PC-3 (cell line): ENCODE measurements at regions of chr1 and their contacts with region 1.

Region 1: DNA sequence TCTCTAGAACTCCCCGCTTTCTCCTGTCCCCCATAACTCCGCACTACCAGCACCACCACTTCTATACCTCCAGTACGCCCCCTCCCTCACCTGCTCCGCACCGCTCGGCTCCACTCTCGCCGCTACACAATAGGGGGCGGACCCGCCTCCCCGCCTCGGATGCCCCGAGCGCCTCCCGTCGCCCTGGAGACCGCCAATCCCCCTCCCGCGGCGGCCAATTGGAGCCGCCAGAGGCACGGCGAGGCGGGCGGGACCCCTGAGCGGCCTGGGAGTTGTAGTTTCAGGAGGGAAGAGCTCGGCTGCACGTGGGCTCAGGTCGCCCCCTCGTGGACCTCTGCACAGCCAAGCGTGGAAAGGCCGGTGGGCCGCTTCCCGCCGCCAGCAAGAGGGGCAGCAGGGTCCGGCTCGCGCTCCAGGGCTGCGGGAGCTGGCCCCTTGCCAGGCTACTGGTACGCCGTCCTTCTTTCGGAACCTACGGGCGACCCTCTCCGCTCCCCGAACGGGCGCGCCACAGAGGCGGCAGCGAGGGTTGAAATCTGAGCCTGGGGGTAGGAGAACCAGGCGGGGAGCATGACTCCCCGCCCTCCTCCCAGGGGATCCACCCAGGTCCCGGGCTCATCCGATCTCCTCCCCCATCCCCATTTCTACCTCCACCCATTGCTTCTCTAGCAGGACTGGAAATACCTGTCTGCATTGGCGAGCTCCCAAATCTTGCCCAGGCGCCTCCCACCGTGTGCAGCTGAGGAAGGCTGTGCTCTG is at the start of gene IGSF9:
- DNase-seq: peak; percentile 99
- ATAC-seq: peak; percentile 92
- H3K4me3 ChIP-seq: peak within 1 kb of the TSS; percentile 84
- H3K27ac ChIP-seq: peak within 1 kb of the TSS; percentile 83
- H3K4me1 ChIP-seq: peaks cover 42% of the 10 kb centered on the region
- H3K27me3 ChIP-seq: no peaks in the 10 kb centered on the region
- CTCF ChIP-seq: peak; percentile 82
- total RNA-seq, gene IGSF9: 15.6 and 19.9 TPM in 2 replicates

Region 2: GRCh38 chr1:159798893-159799292 is 146.8 kb before region 1 on chr1:
- CTCF ChIA-PET with region 1: interaction called, 3 read pairs
- POLR2A ChIA-PET with region 1: no interaction called
- intact Hi-C with region 1: loop called (anchors 2 kb)
- DNase-seq: peak; percentile 92
- ATAC-seq: peak; percentile 94
- H3K4me3 ChIP-seq: no peak overlapping the region
- H3K27ac ChIP-seq: no peak overlapping the region
- H3K4me1 ChIP-seq: peaks cover 3% of the 10 kb centered on the region; the same call in 1 of the 2 replicates
- H3K27me3 ChIP-seq: peaks cover 33% of the 10 kb centered on the region
- CTCF ChIP-seq: peak; percentile 98

Region 3: DNA sequence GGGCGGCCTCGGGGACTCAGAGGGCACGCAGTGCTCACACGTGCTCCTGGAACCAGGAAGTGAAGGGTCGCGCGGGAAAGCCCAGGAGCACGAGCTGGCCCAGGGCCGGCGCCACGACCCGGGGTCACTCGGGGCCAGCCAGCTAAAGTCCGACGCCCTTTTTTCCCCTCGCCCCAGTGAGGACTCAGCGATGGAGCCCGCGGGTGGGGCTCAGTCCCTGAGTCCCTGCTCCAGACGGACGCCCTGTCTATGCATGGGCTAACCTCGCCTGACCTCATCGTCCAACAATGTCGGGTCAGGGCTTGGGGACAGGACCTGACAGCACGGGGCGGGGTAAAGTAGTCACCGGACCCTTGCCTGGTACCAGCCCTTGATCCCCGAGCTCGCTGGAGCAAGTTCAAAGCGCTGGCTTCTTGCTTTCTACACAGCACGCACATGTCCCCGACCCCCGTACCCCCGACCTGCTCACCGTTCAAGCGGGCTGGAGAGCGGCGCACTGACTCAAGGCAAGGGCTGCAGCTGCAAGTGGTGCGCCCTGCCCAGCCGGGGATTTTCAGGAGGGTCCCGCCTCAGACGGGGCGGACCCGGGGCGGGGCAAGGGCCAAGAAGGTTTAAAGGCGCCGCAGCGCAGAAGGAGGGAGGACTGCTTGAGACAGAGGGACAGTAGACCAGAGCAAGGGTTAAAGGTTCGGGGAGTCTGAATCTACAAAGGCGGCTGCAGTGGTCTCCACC is 20.5 kb before region 1 on chr1 and contains the start of gene TAGLN2:
- CTCF ChIA-PET with region 1: no interaction called
- POLR2A ChIA-PET with region 1: no interaction called
- intact Hi-C with region 1: loop called (anchors 2 kb)
- DNase-seq: peak; percentile 97
- ATAC-seq: peak; percentile 75
- H3K4me3 ChIP-seq: peak within 1 kb of the TSS; percentile 96
- H3K27ac ChIP-seq: peak within 1 kb of the TSS; percentile 99
- H3K4me1 ChIP-seq: peaks cover 45% of the 10 kb centered on the region
- H3K27me3 ChIP-seq: no peaks in the 10 kb centered on the region
- CTCF ChIP-seq: no peak
- total RNA-seq, gene TAGLN2: 1,281 and 1,584 TPM in 2 replicates

Region 4: DNA sequence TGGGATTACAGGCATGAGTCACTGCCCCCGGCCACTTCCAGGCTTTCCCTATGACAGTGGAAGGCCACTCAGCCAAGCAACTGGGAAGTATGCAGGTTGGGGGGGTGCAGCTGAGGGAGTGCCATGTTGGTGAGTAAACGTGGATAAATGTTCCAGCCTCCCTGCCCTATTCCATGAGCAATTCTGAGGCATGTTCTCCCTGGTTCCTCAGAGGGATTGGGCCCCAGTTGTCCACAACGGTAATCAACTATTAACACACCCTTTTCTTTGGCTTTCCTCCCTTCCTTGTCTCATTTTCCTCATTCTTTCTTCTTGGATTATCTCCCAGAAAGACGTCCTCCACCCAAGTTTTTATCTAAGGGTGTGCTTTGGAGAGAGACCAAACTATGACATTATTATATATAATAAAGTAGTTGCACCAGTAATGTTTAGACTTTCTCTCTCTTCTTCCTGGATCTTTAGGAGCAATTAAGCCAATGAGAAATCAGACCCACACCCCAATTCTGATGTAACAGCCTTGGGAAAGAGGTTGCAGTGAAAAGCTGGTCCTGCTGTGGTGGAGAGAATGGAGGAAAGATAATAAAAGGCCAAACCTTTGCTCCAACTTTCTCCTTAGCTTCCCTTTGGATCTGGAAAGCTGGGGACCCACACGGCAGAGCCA is 15.2 kb after region 1 on chr1:
- CTCF ChIA-PET with region 1: no interaction called
- POLR2A ChIA-PET with region 1: no interaction called
- intact Hi-C with region 1: loop called (anchors 1 kb)
- DNase-seq: peak; percentile 85
- ATAC-seq: peak; percentile 91
- H3K4me3 ChIP-seq: no peak overlapping the region
- H3K27ac ChIP-seq: peak overlapping the region; percentile 61
- H3K4me1 ChIP-seq: peaks cover 23% of the 10 kb centered on the region
- H3K27me3 ChIP-seq: no peaks in the 10 kb centered on the region
- CTCF ChIP-seq: no peak